Activated CD4-positive, alpha-beta T cell treated with anti-CD3 and anti-CD28 coated beads for 36 hours (primary cell): ENCODE measurements at regions of chr21 and their contacts with region 1.

Region 1: GRCh38 chr21:14523234-14523633 is 22.9 kb downstream of the SAMSN1 start:
- DNase-seq: peak; percentile 64
- ATAC-seq: peak; percentile 79
- H3K4me3 Mint-ChIP-seq: peak overlapping the region; percentile 59
- H3K27ac Mint-ChIP-seq: peak overlapping the region; percentile 91
- H3K4me1 Mint-ChIP-seq: peaks cover 62% of the 10 kb centered on the region
- H3K27me3 Mint-ChIP-seq: no peaks in the 10 kb centered on the region

Region 2: DNA sequence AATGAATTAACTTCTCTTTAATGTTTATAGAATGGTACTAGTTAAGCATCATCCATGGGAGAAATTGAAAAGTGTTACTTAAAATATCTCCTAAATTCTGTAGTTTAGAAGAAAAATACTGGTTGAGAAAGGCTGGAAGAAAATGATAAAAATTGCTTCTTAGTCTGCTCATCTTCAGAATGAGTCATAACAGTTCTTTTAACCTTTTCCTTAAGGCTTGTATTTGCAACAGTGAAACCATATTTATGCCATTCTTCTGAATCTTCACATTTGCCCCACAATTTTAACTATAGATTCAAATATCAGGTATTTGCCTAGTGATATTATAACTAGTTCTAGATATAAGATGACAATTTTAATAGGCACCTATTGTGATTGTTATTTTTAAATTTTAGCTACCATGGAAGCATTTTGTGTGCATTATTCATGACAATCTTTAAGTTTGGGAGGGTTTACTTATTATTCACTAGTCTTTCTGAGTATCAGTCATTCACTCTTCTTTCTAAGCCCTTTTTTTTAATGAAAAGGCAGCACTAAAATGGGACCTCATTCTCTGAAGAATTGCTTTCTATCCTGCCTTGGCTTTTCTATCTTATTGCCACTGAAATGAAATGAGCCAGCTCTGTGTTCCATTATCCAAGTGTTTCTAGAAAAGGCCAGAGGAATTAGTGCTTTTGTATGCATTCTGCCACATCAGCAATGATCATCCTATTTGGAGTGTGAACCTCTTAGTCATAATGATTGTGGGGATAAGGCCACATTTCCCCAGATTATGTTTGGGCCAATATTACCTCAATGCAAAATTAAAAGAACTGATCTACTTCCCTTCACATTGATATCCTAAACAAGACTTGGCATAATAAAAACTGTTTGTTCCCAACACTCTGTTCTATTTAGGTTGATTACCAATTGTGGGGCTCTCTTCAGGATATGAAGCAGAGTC is 35.5 kb before region 1 on chr21:
- CTCF ChIA-PET with region 1: interaction called, 6 read pairs
- POLR2A ChIA-PET with region 1: no interaction called
- intact Hi-C with region 1: loop called (anchors 2 to 5 kb)
- DNase-seq: no peak
- ATAC-seq: peak; percentile 72
- H3K4me3 Mint-ChIP-seq: no peak overlapping the region
- H3K27ac Mint-ChIP-seq: peak overlapping the region; percentile 68
- H3K4me1 Mint-ChIP-seq: peaks cover 56% of the 10 kb centered on the region
- H3K27me3 Mint-ChIP-seq: no peaks in the 10 kb centered on the region

Region 3: DNA sequence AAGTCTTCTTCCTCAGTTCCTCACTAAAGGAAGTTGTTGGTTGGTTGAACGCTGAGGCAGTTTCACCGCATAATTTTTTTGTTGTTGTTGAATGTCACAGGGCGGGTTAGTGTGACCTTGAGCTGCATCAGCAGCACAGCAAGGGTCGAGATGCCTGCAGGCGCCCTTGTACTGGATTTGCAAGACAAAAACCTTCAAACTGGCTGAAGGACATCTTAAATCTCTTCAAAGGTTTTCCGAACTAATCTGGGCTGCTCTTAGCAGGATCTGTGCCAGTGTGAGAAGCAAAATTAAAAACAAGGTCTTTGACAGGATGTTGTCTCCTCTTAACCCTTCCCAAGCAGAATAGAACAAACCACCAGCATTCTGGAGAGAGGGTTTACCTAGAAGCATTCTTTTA is 482.2 kb after region 1 on chr21:
- CTCF ChIA-PET with region 1: no interaction called
- POLR2A ChIA-PET with region 1: no interaction called
- intact Hi-C with region 1: no loop called
- DNase-seq: peak; percentile 24
- ATAC-seq: peak; percentile 59
- H3K4me3 Mint-ChIP-seq: peak overlapping the region; percentile 62
- H3K27ac Mint-ChIP-seq: peak overlapping the region; percentile 80
- H3K4me1 Mint-ChIP-seq: peaks cover 58% of the 10 kb centered on the region
- H3K27me3 Mint-ChIP-seq: no peaks in the 10 kb centered on the region